ENCODE measurements at regions of chr7 and their contacts with region 1.

Region 1: GRCh38 chr7:43582503-43583423 is at the start of gene STK17A:
- DNase-seq: peak; percentile 97
- ATAC-seq: peak; percentile 83
- H3K4me3 ChIP-seq: peak within 1 kb of the TSS; percentile 89 to 98 (median 91)
- H3K4me3 Mint-ChIP-seq: peak within 1 kb of the TSS; percentile 98
- H3K27ac ChIP-seq: peak within 1 kb of the TSS; percentile 86 to 94
- H3K27ac Mint-ChIP-seq: peak within 1 kb of the TSS; percentile 98
- H3K4me1 ChIP-seq: peaks cover 14 to 23% of the 10 kb centered on the region in 2 donors
- H3K4me1 Mint-ChIP-seq: peaks cover 35% of the 10 kb centered on the region
- H3K27me3 ChIP-seq: peaks cover 0 to 2% (median 0%) of the 10 kb centered on the region in 4 experiments
- H3K27me3 Mint-ChIP-seq: no peaks in the 10 kb centered on the region
- CTCF ChIP-seq: peak; percentile 96
- total RNA-seq, gene STK17A: 111 and 115 TPM in 2 replicates

Region 2: GRCh38 chr7:41881331-41882130 is 1701.2 kb before region 1 on chr7:
- CTCF ChIA-PET with region 1: interaction called, 4 read pairs
- POLR2A ChIA-PET with region 1: no interaction called
- intact Hi-C with region 1: loop called (anchors 2 kb)
- DNase-seq: peak; percentile 96
- ATAC-seq: peak; percentile 89
- H3K4me3 ChIP-seq: peak overlapping the region in 1 of 5 experiments; percentile 41
- H3K4me3 Mint-ChIP-seq: peak overlapping the region; percentile 84
- H3K27ac ChIP-seq: peak overlapping the region; percentile 87 to 91
- H3K27ac Mint-ChIP-seq: peak overlapping the region; percentile 93
- H3K4me1 ChIP-seq: peaks cover 57 to 63% of the 10 kb centered on the region in 2 donors
- H3K4me1 Mint-ChIP-seq: peaks cover 71% of the 10 kb centered on the region
- H3K27me3 ChIP-seq: no peaks in the 10 kb centered on the region
- H3K27me3 Mint-ChIP-seq: no peaks in the 10 kb centered on the region
- CTCF ChIP-seq: no peak

Region 3: DNA sequence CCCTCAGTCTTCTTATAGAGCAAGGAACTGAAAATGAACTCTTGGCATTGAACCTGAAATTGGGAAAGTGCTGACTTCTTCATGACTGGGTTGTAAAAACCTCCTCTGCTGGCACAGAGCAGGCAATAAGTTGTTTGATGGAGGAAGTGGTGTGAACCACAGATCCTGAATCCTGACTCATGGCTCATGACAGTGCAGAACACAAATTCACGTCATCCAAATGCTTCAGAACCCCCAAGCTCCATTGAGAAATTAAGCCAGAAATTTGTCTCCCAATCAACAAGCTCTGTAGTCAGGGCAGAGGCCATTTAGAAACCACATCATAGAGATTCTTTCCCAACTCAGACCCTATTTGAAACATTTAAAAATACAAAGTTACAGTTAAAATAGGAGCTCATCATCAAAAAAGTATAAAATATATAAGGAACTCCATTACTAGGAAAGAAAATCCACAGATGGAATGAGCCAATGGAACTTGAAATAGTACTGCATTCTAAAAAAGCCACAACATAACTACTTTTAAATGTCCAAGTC is 10.2 kb before region 1 on chr7:
- CTCF ChIA-PET with region 1: interaction called, 21 read pairs
- POLR2A ChIA-PET with region 1: interaction called, 5 read pairs
- intact Hi-C with region 1: no loop called
- DNase-seq: peak; percentile 5
- ATAC-seq: no peak
- H3K4me3 ChIP-seq: no peak overlapping the region
- H3K4me3 Mint-ChIP-seq: no peak overlapping the region
- H3K27ac ChIP-seq: no peak overlapping the region
- H3K27ac Mint-ChIP-seq: no peak overlapping the region
- H3K4me1 ChIP-seq: no peaks in the 10 kb centered on the region
- H3K4me1 Mint-ChIP-seq: no peaks in the 10 kb centered on the region
- H3K27me3 ChIP-seq: no peaks in the 10 kb centered on the region
- H3K27me3 Mint-ChIP-seq: no peaks in the 10 kb centered on the region
- CTCF ChIP-seq: no peak

Region 4: GRCh38 chr7:43625453-43625852 is 42.7 kb after region 1 on chr7:
- CTCF ChIA-PET with region 1: interaction called, 52 read pairs
- POLR2A ChIA-PET with region 1: interaction called, 8 read pairs
- intact Hi-C with region 1: loop called (anchors 2 kb)
- DNase-seq: peak; percentile 58
- ATAC-seq: peak; percentile 64
- H3K4me3 ChIP-seq: peak overlapping the region in 1 of 5 experiments; percentile 6
- H3K4me3 Mint-ChIP-seq: peak overlapping the region; percentile 64
- H3K27ac ChIP-seq: peak overlapping the region; percentile 37 to 79
- H3K27ac Mint-ChIP-seq: peak overlapping the region; percentile 67
- H3K4me1 ChIP-seq: peaks cover 47 to 50% of the 10 kb centered on the region in 2 donors
- H3K4me1 Mint-ChIP-seq: peaks cover 81% of the 10 kb centered on the region
- H3K27me3 ChIP-seq: no peaks in the 10 kb centered on the region
- H3K27me3 Mint-ChIP-seq: no peaks in the 10 kb centered on the region
- CTCF ChIP-seq: no peak

Region 5: GRCh38 chr7:43647673-43648472 is 65.1 kb after region 1 on chr7:
- CTCF ChIA-PET with region 1: interaction called, 203 read pairs
- POLR2A ChIA-PET with region 1: interaction called, 68 read pairs
- intact Hi-C with region 1: loop called (anchors 1 kb)
- DNase-seq: peak; percentile 35
- ATAC-seq: no peak
- H3K4me3 ChIP-seq: peak overlapping the region; percentile 24 to 73 (median 48)
- H3K4me3 Mint-ChIP-seq: peak overlapping the region; percentile 81
- H3K27ac ChIP-seq: peak overlapping the region; percentile 87 to 97
- H3K27ac Mint-ChIP-seq: peak overlapping the region; percentile 87
- H3K4me1 ChIP-seq: peaks cover 93 to 97% of the 10 kb centered on the region in 2 donors
- H3K4me1 Mint-ChIP-seq: peaks cover 90% of the 10 kb centered on the region
- H3K27me3 ChIP-seq: no peaks in the 10 kb centered on the region
- H3K27me3 Mint-ChIP-seq: no peaks in the 10 kb centered on the region
- CTCF ChIP-seq: no peak

Region 6: GRCh38 chr7:43700059-43700501 is 117.3 kb after region 1 on chr7:
- CTCF ChIA-PET with region 1: interaction called, 721 read pairs
- POLR2A ChIA-PET with region 1: interaction called, 62 read pairs
- intact Hi-C with region 1: loop called (anchors 1 kb)
- DNase-seq: peak; percentile 80
- ATAC-seq: peak; percentile 78
- H3K4me3 ChIP-seq: no peak overlapping the region
- H3K4me3 Mint-ChIP-seq: peak overlapping the region; percentile 12
- H3K27ac ChIP-seq: peak overlapping the region in 1 of 2 donors; percentile 37
- H3K27ac Mint-ChIP-seq: peak overlapping the region; percentile 22
- H3K4me1 ChIP-seq: peaks cover 33% of the 10 kb centered on the region in 2 donors
- H3K4me1 Mint-ChIP-seq: peaks cover 25% of the 10 kb centered on the region
- H3K27me3 ChIP-seq: no peaks in the 10 kb centered on the region
- H3K27me3 Mint-ChIP-seq: no peaks in the 10 kb centered on the region
- CTCF ChIP-seq: peak; percentile 91

Region 7: DNA sequence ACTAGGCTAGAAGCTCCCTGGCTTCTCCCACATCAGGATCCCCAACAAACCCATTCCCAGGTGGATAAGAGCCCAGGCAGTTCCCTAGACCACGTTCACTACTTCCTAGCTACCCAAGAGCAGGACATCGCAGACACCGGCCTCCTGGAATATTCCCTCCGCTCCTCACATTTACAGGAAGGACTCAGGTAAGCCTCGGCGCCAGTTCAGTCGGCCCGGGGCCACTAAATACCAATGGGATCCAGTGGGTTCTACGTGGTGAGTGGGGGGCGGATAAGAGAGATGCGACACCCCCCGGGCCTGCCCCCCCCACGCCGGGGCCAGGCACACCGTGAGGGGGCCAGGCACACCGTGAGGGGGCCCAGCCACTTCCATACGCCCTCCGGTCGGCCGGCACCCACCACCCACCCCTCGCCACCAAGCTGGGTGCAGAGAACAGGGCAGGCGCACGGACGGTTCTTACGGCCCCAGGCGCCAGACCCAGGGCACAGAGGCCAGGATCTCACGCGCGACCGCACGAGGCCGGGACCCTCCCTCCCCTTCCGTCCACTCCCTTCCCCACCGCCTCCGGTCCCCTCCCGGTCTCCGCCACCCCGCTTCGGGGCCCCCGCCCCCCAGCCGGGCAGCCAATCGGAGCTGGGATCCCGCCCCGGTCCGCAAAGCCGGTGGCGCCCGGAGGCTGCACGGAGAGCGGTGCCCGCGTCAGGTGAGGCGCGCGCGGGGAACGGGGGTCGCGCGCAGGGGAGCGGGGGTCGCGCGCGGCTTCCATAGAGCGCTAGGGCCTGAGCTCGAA is 175.5 kb after region 1 on chr7 and contains the start of gene BLVRA:
- CTCF ChIA-PET with region 1: interaction called, 12 read pairs
- POLR2A ChIA-PET with region 1: interaction called, 4 read pairs
- intact Hi-C with region 1: no loop called
- DNase-seq: peak; percentile 64
- ATAC-seq: peak; percentile 85
- H3K4me3 ChIP-seq: peak within 1 kb of the TSS; percentile 51 to 89 (median 69)
- H3K4me3 Mint-ChIP-seq: peak within 1 kb of the TSS; percentile 91
- H3K27ac ChIP-seq: peak within 1 kb of the TSS in 1 of 2 donors; percentile 52
- H3K27ac Mint-ChIP-seq: peak within 1 kb of the TSS; percentile 67
- H3K4me1 ChIP-seq: peaks cover 9 to 10% of the 10 kb centered on the region in 2 donors
- H3K4me1 Mint-ChIP-seq: peaks cover 23% of the 10 kb centered on the region
- H3K27me3 ChIP-seq: peaks cover 0 to 7% (median 3%) of the 10 kb centered on the region in 4 experiments
- H3K27me3 Mint-ChIP-seq: peaks cover 8% of the 10 kb centered on the region
- CTCF ChIP-seq: no peak
- total RNA-seq, gene BLVRA: 6.9 and 7.2 TPM in 2 replicates